ENCODE measurements at regions of chr7 and their contacts with region 1.

Region 1: GRCh38 chr7:46512891-46513645 is 592.0 kb upstream of the IGFBP3 start:
- DNase-seq: no peak
- ATAC-seq: no peak

Region 2: GRCh38 chr7:46530081-46530763 is 17.2 kb after region 1 on chr7:
- intact Hi-C with region 1: loop called (anchors 2 kb)
- DNase-seq: no peak
- ATAC-seq: no peak

Region 3: GRCh38 chr7:46558482-46559193 is 45.6 kb after region 1 on chr7:
- intact Hi-C with region 1: no loop called
- DNase-seq: no peak
- ATAC-seq: no peak

Region 4: GRCh38 chr7:46603780-46604179 is 90.7 kb after region 1 on chr7:
- intact Hi-C with region 1: loop called (anchors 5 kb)
- DNase-seq: peak; percentile 94
- ATAC-seq: peak; percentile 92